Activated CD4-positive, alpha-beta memory T cell treated with anti-CD3 and anti-CD28 coated beads, Interleukin-2, amount 10 ng/mL, durations not matched to agents 7 days and 5 days (primary cell): ENCODE measurements at regions of chr1 and their contacts with region 1.

Region 1: DNA sequence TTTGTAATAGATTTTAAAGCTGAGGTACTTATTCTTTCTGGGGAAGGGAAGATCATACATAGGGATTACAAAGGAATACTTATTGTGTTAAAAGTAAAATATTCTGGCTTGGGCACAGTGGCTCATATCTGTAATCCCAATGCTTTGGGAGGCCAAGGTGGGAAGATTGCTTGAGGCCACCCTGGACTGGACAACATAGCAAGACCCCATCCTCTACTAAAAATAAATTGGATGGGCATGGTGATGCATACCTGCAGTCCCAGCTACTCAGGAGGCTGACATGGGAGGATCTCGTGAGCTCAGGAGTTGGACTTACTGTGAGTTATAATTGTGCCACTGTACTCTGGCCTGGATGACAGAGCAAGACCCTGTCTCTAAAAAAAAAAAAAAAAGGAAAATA is 27.6 kb downstream of the GABPB2 start:
- DNase-seq: no peak
- H3K4me3 Mint-ChIP-seq: no peak overlapping the region
- H3K27ac Mint-ChIP-seq: no peak overlapping the region
- H3K4me1 Mint-ChIP-seq: no peaks in the 10 kb centered on the region
- H3K27me3 Mint-ChIP-seq: no peaks in the 10 kb centered on the region

Region 2: GRCh38 chr1:150813058-150813707 is 284.9 kb before region 1 on chr1:
- CTCF ChIA-PET with region 1: no interaction called
- POLR2A ChIA-PET with region 1: no interaction called
- DNase-seq: peak; percentile 18
- H3K4me3 Mint-ChIP-seq: no peak overlapping the region
- H3K27ac Mint-ChIP-seq: no peak overlapping the region
- H3K4me1 Mint-ChIP-seq: peaks cover 1% of the 10 kb centered on the region
- H3K27me3 Mint-ChIP-seq: no peaks in the 10 kb centered on the region

Region 3: GRCh38 chr1:151036363-151036762 is 61.8 kb before region 1 on chr1 and contains the start of gene BNIPL:
- CTCF ChIA-PET with region 1: no interaction called
- POLR2A ChIA-PET with region 1: no interaction called
- DNase-seq: no peak
- H3K4me3 Mint-ChIP-seq: no peak within 1 kb of the TSS
- H3K27ac Mint-ChIP-seq: no peak within 1 kb of the TSS
- H3K4me1 Mint-ChIP-seq: no peaks in the 10 kb centered on the region
- H3K27me3 Mint-ChIP-seq: no peaks in the 10 kb centered on the region
- total RNA-seq, gene BNIPL: 0.98 to 1.2 TPM

Region 4: GRCh38 chr1:151070474-151071276 is 27.5 kb before region 1 on chr1 and contains the start of gene GABPB2:
- CTCF ChIA-PET with region 1: interaction called, 15 read pairs
- POLR2A ChIA-PET with region 1: no interaction called
- DNase-seq: peak; percentile 88
- H3K4me3 Mint-ChIP-seq: peak within 1 kb of the TSS; percentile 98
- H3K27ac Mint-ChIP-seq: peak within 1 kb of the TSS; percentile 99
- H3K4me1 Mint-ChIP-seq: peaks cover 31% of the 10 kb centered on the region
- H3K27me3 Mint-ChIP-seq: no peaks in the 10 kb centered on the region
- total RNA-seq, gene GABPB2: 24.5 to 25.9 TPM

Region 5: DNA sequence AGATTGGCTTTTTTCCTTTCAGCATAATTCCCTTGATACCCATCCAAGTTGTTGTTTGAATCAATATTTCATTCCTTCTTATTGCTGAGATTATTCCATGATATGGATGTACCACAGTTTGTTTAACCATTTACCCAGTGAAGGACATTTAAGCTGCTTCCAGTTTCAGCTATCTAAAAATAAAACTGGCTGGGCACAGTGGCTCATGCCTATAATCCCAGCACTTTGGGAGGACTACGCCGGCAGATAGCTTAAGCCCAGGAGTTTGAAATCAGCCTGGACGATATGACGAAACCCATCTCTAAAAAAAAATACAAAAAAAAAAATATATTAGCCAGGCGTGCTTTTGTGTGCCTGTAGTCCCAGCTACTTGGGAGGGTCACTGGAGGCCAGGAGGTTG is 15.8 kb after region 1 on chr1:
- CTCF ChIA-PET with region 1: interaction called, 24 read pairs
- POLR2A ChIA-PET with region 1: no interaction called
- DNase-seq: no peak
- H3K4me3 Mint-ChIP-seq: no peak overlapping the region
- H3K27ac Mint-ChIP-seq: no peak overlapping the region
- H3K4me1 Mint-ChIP-seq: no peaks in the 10 kb centered on the region
- H3K27me3 Mint-ChIP-seq: no peaks in the 10 kb centered on the region

Region 6: GRCh38 chr1:151146412-151147140 is 48.5 kb after region 1 on chr1 and contains the start of gene SEMA6C:
- CTCF ChIA-PET with region 1: interaction called, 267 read pairs
- POLR2A ChIA-PET with region 1: no interaction called
- DNase-seq: peak; percentile 89
- H3K4me3 Mint-ChIP-seq: peak within 1 kb of the TSS; percentile 93
- H3K27ac Mint-ChIP-seq: no peak within 1 kb of the TSS
- H3K4me1 Mint-ChIP-seq: peaks cover 11% of the 10 kb centered on the region
- H3K27me3 Mint-ChIP-seq: peaks cover 14% of the 10 kb centered on the region
- total RNA-seq, gene SEMA6C: 1.8 to 2.3 TPM

Region 7: DNA sequence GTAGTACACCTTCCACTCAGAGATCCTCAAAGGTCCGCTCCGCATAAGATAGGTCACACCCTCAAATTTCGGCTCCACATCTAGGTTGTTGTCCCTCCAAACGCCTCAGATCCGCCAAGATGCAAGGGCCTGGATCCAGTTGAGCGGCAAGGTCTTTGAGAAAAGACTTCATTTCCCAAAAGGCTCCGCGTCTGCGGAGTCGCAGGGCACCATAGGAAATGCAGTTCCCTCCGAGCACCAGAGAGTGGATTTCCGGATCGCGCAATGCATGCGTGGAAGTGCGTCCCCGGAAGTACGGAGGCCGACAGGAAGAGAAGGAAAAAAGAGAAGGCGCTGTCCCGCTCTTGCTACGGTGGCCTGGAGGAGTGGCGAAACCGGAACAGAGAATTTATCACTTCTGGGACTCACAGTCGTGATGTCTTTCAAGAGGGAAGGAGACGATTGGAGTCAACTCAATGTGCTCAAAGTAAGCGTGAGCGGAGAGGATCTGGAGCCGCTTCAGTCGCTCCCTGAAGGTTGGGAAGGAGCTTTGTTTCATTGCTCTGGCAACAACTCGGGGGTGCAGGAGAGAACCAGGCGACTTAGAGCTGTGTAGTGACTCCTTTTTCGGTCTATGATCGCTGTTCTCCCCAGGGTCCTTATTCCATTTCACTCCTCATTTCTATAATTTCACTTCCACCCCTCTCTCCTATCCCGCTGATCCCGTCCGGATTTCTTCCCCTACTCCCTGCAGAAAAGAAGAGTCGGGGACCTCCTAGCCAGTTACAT is 67.8 kb after region 1 on chr1 and contains the starts of genes LYSMD1 and SCNM1:
- CTCF ChIA-PET with region 1: interaction called, 13 read pairs
- POLR2A ChIA-PET with region 1: no interaction called
- DNase-seq: peak; percentile 98
- H3K4me3 Mint-ChIP-seq: peak within 1 kb of the TSS; percentile 85
- H3K27ac Mint-ChIP-seq: peak within 1 kb of the TSS; percentile 83
- H3K4me1 Mint-ChIP-seq: peaks cover 58% of the 10 kb centered on the region
- H3K27me3 Mint-ChIP-seq: no peaks in the 10 kb centered on the region
- total RNA-seq, gene LYSMD1: 2.0 to 2.1 TPM
- total RNA-seq, gene SCNM1: 63.5 to 67.9 TPM